Common myeloid progenitor, CD34-positive (primary cell): ENCODE measurements at regions of chr11 and their contacts with region 1.

Region 1: GRCh38 chr11:3854977-3855807 is at the start of gene STIM1:
- DNase-seq: peak; percentile 96 to 99 (median 98)
- H3K4me3 ChIP-seq: peak within 1 kb of the TSS; percentile 80 to 95 (median 88)
- H3K27ac ChIP-seq: peak within 1 kb of the TSS; percentile 72 to 89
- H3K4me1 ChIP-seq: peaks cover 32 to 67% (median 50%) of the 10 kb centered on the region in 4 experiments
- H3K27me3 ChIP-seq: no peaks in the 10 kb centered on the region

Region 2: GRCh38 chr11:3797329-3798095 is 57.7 kb before region 1 on chr11 and contains the start of gene NUP98:
- CTCF ChIA-PET with region 1: no interaction called
- POLR2A ChIA-PET with region 1: no interaction called
- DNase-seq: peak; percentile 100
- H3K4me3 ChIP-seq: peak within 1 kb of the TSS; percentile 70 to 95 (median 91)
- H3K27ac ChIP-seq: peak within 1 kb of the TSS; percentile 94 to 99
- H3K4me1 ChIP-seq: peaks cover 9 to 35% (median 26%) of the 10 kb centered on the region in 4 experiments
- H3K27me3 ChIP-seq: no peaks in the 10 kb centered on the region

Region 3: GRCh38 chr11:3867209-3868091 is 12.3 kb after region 1 on chr11:
- CTCF ChIA-PET with region 1: interaction called, 168 read pairs
- POLR2A ChIA-PET with region 1: no interaction called
- DNase-seq: peak in 1 of 3 donors; percentile 33
- H3K4me3 ChIP-seq: peak overlapping the region in 2 of 7 experiments; percentile 8 to 28
- H3K27ac ChIP-seq: peak overlapping the region; percentile 9 to 75
- H3K4me1 ChIP-seq: peaks cover 36 to 72% (median 56%) of the 10 kb centered on the region in 4 experiments
- H3K27me3 ChIP-seq: no peaks in the 10 kb centered on the region

Region 4: GRCh38 chr11:3888876-3889275 is 33.7 kb after region 1 on chr11:
- CTCF ChIA-PET with region 1: interaction called, 20 read pairs
- POLR2A ChIA-PET with region 1: no interaction called
- DNase-seq: no peak
- H3K4me3 ChIP-seq: no peak overlapping the region
- H3K27ac ChIP-seq: no peak overlapping the region
- H3K4me1 ChIP-seq: peaks cover 16 to 53% (median 25%) of the 10 kb centered on the region in 4 experiments
- H3K27me3 ChIP-seq: no peaks in the 10 kb centered on the region

Region 5: DNA sequence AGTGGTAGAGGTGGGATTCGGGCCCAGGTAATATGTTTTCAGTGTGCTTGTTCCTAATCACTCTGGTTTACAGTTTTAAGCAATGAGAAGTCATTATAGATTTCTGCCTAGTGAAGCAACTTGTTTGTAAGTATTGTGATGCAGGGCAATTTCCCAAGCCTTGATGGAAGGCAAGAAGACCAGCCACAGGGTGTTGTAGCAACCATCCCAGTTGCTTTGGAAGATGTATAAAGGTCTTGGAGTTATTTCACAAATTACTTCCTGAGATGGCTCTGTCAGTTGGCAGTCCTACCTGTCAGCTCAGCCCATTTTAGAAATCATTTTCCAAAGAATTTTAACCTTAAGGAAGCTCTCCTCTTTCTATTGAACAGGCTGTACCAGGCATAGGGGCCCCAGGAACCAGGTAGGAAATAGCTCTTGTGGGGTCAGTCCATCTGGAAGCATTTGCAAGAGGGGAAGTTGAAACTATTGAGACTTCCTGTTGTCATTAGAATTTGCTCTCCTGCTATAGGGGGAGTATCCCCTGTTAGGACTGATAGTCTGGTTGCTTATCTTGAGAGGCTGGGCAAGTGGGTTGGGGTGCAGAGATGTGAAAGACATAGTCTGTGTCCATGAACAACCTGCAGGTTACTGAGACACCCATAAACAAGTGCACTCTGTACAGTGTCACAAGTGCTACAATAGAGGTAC is 48.2 kb after region 1 on chr11:
- CTCF ChIA-PET with region 1: interaction called, 25 read pairs
- POLR2A ChIA-PET with region 1: interaction called, 3 read pairs
- DNase-seq: peak in 2 of 3 donors; percentile 38 to 60
- H3K4me3 ChIP-seq: peak overlapping the region in 1 of 7 experiments; percentile 43
- H3K27ac ChIP-seq: no peak overlapping the region
- H3K4me1 ChIP-seq: peaks cover 10 to 55% (median 26%) of the 10 kb centered on the region in 4 experiments
- H3K27me3 ChIP-seq: no peaks in the 10 kb centered on the region

Region 6: GRCh38 chr11:3939211-3939610 is 84.0 kb after region 1 on chr11:
- CTCF ChIA-PET with region 1: interaction called, 17 read pairs
- POLR2A ChIA-PET with region 1: interaction called, 6 read pairs
- DNase-seq: peak in 1 of 3 donors; percentile 24
- H3K4me3 ChIP-seq: no peak overlapping the region
- H3K27ac ChIP-seq: no peak overlapping the region
- H3K4me1 ChIP-seq: peaks cover 13 to 34% (median 27%) of the 10 kb centered on the region in 4 experiments
- H3K27me3 ChIP-seq: no peaks in the 10 kb centered on the region

Region 7: DNA sequence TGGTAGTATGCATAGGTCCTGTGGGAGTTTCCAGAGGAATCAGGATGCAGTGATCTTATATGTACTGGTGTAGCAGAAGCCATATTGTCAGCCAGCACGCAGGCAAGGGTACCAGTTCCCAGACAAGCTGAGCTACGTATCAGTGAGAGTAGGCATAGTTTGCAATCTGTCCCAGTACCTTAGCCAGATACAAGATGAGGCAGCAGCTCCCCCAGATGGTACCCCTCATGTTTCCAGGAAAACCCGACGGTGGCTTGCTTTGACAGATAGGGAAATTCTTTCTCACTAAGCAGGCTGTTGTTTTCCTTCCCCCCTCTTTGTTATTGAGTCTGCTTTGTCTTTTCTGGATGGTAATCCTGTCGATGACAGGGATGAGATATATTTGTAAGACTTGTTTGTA is 129.7 kb after region 1 on chr11:
- CTCF ChIA-PET with region 1: interaction called, 112 read pairs
- POLR2A ChIA-PET with region 1: interaction called, 5 read pairs
- DNase-seq: peak; percentile 76 to 82 (median 78)
- H3K4me3 ChIP-seq: peak overlapping the region in 1 of 7 experiments; percentile 6
- H3K27ac ChIP-seq: no peak overlapping the region
- H3K4me1 ChIP-seq: peaks cover 0 to 31% (median 24%) of the 10 kb centered on the region in 4 experiments
- H3K27me3 ChIP-seq: no peaks in the 10 kb centered on the region

Region 8: DNA sequence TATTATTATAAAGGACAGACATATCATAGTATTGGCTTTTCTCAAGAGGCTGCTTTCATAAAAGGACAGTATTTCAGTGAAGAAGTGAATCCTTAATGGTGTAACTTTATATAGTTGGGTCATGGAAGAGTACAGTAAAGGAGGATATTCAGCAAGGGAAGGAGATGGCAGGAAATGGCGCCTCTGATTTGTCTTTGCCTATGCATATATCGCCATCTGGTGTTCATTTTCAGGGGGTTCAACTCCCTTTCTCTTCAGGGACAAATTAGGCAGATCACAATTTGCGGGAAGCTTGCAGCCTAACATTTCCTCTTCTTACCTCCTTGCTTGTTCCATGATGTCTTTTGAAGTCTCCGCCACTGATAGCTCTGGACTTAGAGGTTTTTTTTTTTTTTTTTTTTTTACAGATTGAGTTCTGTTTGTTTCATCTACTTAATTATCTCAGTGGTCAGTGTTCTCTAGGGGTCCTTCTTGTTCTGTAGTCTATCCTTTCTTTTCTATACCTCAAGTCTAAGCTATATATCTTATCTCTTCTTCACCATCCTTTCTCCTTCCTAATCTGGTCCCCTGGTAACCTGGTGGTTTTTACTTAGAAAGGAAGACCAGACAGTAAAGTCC is 217.6 kb after region 1 on chr11:
- CTCF ChIA-PET with region 1: interaction called, 423 read pairs
- POLR2A ChIA-PET with region 1: no interaction called
- DNase-seq: peak; percentile 80 to 88 (median 83)
- H3K4me3 ChIP-seq: no peak overlapping the region
- H3K27ac ChIP-seq: no peak overlapping the region
- H3K4me1 ChIP-seq: peaks cover 13 to 40% (median 30%) of the 10 kb centered on the region in 4 experiments
- H3K27me3 ChIP-seq: no peaks in the 10 kb centered on the region

Region 9: DNA sequence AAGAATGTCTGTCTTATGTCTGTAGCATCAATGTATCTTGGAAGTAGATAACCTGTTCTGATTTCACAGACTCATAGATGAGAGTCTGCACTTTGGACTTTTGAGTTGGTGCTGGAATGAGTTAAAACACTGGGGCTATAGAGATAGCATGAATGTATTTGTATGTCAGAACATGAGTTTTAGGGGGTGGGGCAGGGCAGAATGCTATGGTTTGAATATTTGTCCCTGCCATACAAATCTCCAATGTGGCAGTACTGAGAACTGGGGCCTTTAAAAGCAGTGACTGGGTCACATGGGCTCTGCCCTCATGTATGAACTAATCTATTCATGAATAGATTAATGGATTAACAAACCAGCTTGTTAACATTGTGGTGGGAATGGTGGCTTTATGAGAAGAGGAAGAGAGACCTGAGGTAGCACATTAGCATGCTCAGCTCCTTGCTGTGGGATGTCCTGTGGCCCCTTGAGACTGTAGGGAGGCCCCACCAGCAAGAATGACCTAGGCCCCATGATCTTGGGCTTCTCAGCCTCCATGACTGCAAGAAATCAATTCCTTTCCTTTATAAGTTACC is 611.8 kb after region 1 on chr11:
- CTCF ChIA-PET with region 1: no interaction called
- POLR2A ChIA-PET with region 1: no interaction called
- DNase-seq: no peak
- H3K4me3 ChIP-seq: no peak overlapping the region
- H3K27ac ChIP-seq: no peak overlapping the region
- H3K4me1 ChIP-seq: peaks cover 0 to 9% (median 2%) of the 10 kb centered on the region in 4 experiments
- H3K27me3 ChIP-seq: peaks cover 0 to 1% (median 0%) of the 10 kb centered on the region in 5 experiments